Activated T-helper 1 cell treated with anti-CD3 and anti-CD28 coated beads, Interleukin-12 subunit alpha, Interleukin-12 subunit beta, Interleukin-2, Interleukin-4 antibody, amounts not matched to agents 30 ng/mL and 10 ng/mL and 1 ng/mL, durations not matched to agents 14 hours and 24 hours and 36 hours (primary cell): ENCODE measurements at regions of chr18 and their contacts with region 1.

Region 1: GRCh38 chr18:70205421-70206397 is at the start of gene RTTN:
- DNase-seq: peak; percentile 89
- H3K4me3 Mint-ChIP-seq: peak within 1 kb of the TSS; percentile 94
- H3K27ac Mint-ChIP-seq: peak within 1 kb of the TSS; percentile 98
- H3K4me1 Mint-ChIP-seq: peaks cover 32% of the 10 kb centered on the region
- H3K27me3 Mint-ChIP-seq: peaks cover 4% of the 10 kb centered on the region
- total RNA-seq, gene RTTN: 25.3 and 28.6 TPM in 2 replicates

Region 2: DNA sequence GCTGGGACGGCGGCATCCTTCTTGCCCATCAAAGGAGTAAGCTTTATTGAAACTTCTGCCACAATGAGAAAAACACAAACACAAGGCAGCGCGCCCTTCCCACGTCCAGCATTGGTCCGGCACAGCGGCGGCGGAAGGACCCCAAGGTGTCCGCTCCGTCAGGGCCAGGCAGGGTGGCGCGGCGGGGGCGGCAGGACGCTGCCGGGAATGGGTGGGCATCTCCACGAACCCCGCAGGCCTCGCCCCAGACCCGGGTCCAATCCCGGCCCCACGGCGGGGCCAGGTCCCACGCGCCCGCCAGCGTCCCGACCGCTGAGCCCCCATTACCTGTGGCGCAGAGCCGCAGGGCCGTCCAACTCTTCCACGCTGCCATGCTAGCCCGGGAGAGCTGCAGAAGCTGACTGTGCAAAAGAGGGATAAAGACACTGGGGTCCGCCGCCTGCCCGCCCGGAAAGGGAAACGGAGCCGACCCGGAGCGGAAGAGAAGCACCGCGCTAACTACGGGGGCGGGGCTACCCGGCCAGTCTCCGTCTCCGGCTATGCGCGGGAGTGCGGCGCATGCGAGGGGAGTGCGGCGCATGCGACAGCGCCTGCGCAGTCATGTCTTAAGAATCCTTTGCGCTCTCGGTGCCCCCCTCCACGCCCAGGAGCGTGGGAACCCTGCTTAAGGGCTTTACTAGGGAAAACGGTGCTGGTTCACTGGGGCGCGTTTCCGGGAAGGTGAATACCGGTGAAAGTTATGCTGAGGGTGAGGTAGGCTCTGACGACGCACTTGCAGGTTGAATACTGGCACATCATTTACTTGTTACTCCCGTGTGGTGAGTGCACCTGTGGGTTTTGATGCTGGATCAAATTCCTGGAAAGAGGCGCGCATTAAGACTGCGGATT is 1490.9 kb before region 1 on chr18 and contains the start of gene TMX3:
- intact Hi-C with region 1: loop called (anchors 1 kb)
- DNase-seq: peak; percentile 90
- H3K4me3 Mint-ChIP-seq: peak within 1 kb of the TSS; percentile 92
- H3K27ac Mint-ChIP-seq: peak within 1 kb of the TSS; percentile 87
- H3K4me1 Mint-ChIP-seq: peaks cover 51% of the 10 kb centered on the region
- H3K27me3 Mint-ChIP-seq: no peaks in the 10 kb centered on the region
- total RNA-seq, gene TMX3: 63.7 and 65.0 TPM in 2 replicates

Region 3: DNA sequence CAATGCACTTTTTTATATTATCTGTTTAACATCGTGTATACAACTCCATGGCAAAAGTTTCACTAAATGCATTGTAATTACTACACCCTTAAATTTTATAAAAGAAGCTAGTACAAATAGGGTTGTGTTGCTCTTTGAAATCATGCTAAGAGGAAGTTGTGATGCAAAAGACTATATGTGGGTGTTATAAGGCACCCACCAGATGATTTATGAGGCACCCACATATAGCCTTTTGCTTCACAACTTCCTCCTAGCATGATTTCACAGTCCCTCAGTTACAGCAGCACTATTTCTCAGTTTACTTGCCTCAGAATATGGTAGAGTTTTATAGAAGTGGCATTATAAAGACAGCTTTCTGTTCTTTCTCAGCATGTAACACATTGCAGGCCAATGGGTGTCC is 1082.3 kb before region 1 on chr18:
- intact Hi-C with region 1: no loop called
- DNase-seq: no peak
- H3K4me3 Mint-ChIP-seq: no peak overlapping the region
- H3K27ac Mint-ChIP-seq: no peak overlapping the region
- H3K4me1 Mint-ChIP-seq: no peaks in the 10 kb centered on the region
- H3K27me3 Mint-ChIP-seq: no peaks in the 10 kb centered on the region

Region 4: GRCh38 chr18:69845593-69846506 is 359.9 kb before region 1 on chr18:
- intact Hi-C with region 1: loop called (anchors 1 kb)
- DNase-seq: no peak
- H3K4me3 Mint-ChIP-seq: no peak overlapping the region
- H3K27ac Mint-ChIP-seq: no peak overlapping the region
- H3K4me1 Mint-ChIP-seq: no peaks in the 10 kb centered on the region
- H3K27me3 Mint-ChIP-seq: peaks cover 2% of the 10 kb centered on the region

Region 5: DNA sequence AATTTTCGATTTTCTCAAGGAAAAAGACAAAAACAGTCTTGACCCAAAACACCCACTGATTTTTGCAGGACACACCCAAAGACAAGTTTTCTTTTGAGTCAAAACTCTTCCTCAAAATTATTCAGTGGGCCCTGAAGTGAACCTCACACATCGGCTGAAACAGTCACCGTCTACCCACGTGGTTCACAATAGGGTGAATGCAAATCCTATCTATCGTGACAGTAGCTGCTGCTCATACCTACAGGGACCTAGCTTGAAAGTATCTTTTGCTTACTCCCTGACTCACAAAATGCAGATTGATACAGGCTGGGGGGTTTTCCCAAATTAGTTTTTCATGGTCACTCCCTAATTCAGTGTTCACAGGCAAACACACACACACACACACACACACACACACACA is 247.3 kb before region 1 on chr18:
- intact Hi-C with region 1: loop called (anchors 5 kb)
- DNase-seq: no peak
- H3K4me3 Mint-ChIP-seq: no peak overlapping the region
- H3K27ac Mint-ChIP-seq: no peak overlapping the region
- H3K4me1 Mint-ChIP-seq: peaks cover 16% of the 10 kb centered on the region
- H3K27me3 Mint-ChIP-seq: peaks cover 1% of the 10 kb centered on the region

Region 6: DNA sequence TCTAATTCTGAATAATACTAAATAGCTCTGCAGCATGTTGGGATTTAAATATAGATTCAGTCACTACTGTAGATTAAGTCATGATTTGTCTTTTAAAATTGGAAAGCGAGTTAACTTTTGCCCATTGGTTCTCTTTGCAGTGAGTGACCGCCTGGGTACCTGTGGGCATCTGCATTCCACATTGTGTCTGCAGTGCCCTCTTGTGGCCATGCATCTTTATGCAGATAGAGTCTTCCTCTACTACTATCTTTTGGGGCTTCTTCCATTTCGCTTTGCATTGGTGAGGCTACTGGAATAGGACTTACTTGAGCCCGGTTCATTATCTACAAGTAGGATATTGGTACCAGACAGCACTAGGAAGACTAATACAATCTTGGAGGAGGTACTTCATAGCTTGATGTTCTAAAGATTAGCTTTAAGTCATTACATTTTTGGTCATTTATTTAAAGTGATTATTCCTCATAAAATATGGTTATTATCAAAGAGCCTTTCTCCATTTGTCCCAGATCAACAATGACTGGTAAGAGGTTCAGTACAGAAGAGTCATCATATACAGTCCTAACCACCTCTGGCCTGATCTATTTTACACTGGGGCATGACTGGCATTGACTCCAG is 286.1 kb after region 1 on chr18:
- intact Hi-C with region 1: loop called (anchors 5 kb)
- DNase-seq: peak; percentile 3
- H3K4me3 Mint-ChIP-seq: no peak overlapping the region
- H3K27ac Mint-ChIP-seq: no peak overlapping the region
- H3K4me1 Mint-ChIP-seq: no peaks in the 10 kb centered on the region
- H3K27me3 Mint-ChIP-seq: peaks cover 2% of the 10 kb centered on the region